Activated CD8-positive, alpha-beta T cell treated with anti-CD3 and anti-CD28 coated beads for 36 hours (primary cell): ENCODE measurements at regions of chr11 and their contacts with region 1.

Region 1: DNA sequence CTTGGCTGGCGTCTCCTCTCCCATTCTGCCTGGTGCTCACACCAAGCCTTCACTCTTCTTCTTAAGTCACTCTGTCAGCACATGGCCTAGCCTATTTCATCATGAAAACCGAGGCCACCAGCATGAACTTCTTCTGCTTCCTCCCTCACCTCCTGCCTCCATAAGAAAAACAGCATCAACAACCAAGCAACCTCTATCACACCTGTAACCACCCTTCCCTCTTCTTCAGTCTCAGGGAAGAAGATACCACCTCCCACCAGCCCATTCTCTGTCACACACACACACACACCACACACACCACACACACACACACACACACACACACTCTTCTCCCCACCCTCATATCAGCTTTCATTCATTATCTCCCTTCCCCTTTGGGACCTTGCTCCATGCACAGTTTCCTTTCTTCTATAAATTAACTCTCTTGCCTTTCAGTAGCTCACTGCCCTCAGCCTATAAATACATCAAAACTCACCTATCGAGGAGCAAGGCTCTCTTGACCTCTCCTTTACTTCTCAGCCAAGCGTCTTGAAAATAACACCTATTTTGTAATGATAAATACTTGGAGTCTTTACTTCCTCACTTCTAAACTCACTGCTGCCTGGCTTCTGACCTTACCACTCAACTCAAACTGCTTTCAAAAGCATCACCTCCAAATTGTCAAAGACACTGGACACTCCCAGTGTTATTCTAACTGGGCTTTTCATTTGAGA is 36.6 kb downstream of the SC5D start:
- DNase-seq: peak; percentile 41
- ATAC-seq: peak; percentile 57
- H3K4me3 Mint-ChIP-seq: no peak overlapping the region
- H3K27ac Mint-ChIP-seq: no peak overlapping the region
- H3K4me1 Mint-ChIP-seq: peaks cover 3% of the 10 kb centered on the region
- H3K27me3 Mint-ChIP-seq: no peaks in the 10 kb centered on the region
- CTCF ChIP-seq: no peak

Region 2: DNA sequence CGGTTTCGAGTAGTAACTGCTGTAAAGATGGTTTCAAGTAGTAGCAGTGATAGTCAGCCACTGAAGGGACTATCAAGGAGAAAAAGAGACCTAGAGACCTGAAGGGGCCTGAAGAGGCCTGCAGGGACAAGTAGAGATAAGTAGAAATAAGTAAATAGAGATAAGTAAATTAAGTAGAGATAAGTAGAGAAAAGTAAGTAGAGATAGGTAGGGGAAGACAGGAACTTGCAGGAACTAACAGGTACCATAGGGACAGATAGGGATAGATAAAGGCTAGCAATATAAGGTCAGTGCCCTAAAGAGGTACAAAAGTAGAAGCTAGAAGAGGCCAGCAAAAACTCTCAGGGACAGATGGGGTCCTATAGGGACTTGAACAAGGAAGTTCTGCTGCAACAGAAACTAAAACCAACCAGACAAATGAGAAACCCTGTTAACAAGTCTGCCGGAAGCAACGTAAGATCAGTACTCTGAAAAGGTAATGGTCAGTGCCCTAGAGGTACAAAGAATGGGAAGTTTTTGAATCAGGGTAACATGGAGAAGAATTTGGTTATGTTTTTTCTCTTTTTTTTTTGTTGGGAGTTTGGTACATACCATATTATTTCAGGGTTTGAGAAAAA is 46.1 kb before region 1 on chr11:
- CTCF ChIA-PET with region 1: no interaction called
- POLR2A ChIA-PET with region 1: no interaction called
- intact Hi-C with region 1: no loop called
- DNase-seq: no peak
- ATAC-seq: no peak
- H3K4me3 Mint-ChIP-seq: no peak overlapping the region
- H3K27ac Mint-ChIP-seq: no peak overlapping the region
- H3K4me1 Mint-ChIP-seq: no peaks in the 10 kb centered on the region
- H3K27me3 Mint-ChIP-seq: peaks cover 13% of the 10 kb centered on the region
- CTCF ChIP-seq: no peak

Region 3: DNA sequence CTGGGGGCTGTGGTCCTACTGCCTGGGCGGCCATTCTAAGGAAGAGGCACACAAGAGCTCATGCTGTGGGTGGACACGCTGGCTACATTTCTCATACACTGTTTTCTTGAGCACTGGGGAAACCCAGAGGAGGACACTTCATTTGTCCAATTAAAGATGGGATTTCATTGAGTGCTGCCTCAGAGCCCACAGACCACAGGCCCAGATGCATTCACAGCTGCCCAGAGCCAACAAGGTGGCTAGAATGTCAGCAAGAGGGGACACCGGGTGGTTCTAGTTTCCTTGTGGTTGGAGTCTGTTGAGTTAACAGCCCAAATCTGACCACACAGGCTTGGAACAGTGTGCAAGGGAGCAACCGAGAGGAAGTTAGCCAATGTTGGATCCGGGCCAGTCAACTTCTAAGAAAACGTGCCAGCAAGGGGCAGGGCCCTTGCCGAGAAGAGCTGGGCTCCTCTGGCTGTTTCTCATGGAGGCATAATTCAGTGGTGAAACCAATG is 88.0 kb after region 1 on chr11:
- CTCF ChIA-PET with region 1: no interaction called
- POLR2A ChIA-PET with region 1: no interaction called
- intact Hi-C with region 1: loop called (anchors 5 kb)
- DNase-seq: peak; percentile 80
- ATAC-seq: peak; percentile 65
- H3K4me3 Mint-ChIP-seq: no peak overlapping the region
- H3K27ac Mint-ChIP-seq: peak overlapping the region; percentile 74
- H3K4me1 Mint-ChIP-seq: peaks cover 52% of the 10 kb centered on the region
- H3K27me3 Mint-ChIP-seq: no peaks in the 10 kb centered on the region
- CTCF ChIP-seq: no peak